Calu3 (cell line): ENCODE measurements at regions of chr6 and their contacts with region 1.

Region 1: DNA sequence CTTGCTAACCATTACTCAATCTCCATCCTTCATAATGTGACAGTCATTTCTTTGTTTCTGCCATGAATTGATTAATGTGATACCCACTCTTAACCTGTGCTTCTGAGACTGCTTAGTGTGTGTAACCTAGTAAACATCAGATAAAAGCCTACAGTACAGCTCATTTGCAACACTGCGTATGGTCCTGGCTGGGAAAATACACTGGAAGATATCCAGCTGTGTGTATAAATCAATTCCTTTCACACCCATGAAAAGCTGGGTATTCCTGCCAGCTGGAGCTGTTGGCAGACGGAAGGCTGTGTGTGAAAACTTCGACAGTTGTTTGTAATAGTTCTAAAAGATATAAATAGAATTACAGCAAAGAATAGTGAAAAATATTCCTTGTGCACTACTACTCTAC is 509.2 kb downstream of the FRK start:
- DNase-seq: no peak
- H3K4me3 Mint-ChIP-seq: no peak overlapping the region
- H3K27ac Mint-ChIP-seq: no peak overlapping the region
- H3K4me1 Mint-ChIP-seq: no peaks in the 10 kb centered on the region
- H3K27me3 Mint-ChIP-seq: no peaks in the 10 kb centered on the region
- CTCF ChIP-seq: no peak

Region 2: DNA sequence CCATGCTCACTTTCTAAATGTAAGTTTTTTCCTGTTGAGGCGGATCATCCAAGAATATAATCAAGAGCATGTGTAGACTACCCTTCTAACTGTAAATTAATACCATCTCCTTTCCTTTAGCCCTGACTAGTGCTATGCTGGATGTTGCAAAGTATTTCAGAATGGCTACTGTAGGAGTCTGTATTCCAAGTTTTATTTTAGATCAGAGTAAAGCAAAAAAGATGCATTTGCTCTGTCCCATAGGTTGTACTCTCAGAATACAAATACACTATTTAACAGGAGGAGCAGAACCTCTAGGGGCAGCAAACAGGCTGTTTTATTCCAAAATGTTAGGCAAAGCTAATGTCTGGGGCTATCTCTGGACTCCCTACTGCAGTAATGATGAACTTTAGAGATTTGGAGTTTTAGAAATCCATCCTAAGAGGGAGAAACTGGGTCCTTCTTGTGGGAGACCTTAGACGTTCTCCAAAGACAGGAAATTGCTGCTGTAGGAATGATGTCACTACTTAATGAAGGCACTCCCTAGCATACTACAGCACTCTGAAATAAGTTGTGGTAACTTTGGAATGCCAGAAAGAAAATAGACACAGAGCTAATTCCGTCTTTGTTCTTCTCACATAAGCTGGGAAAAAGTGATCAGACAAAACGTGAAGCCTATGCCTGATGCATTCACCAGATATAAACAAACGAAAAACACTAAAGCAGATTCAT is 816.3 kb before region 1 on chr6:
- CTCF ChIA-PET with region 1: interaction called, 11 read pairs
- intact Hi-C with region 1: no loop called
- DNase-seq: no peak
- H3K4me3 Mint-ChIP-seq: no peak overlapping the region
- H3K27ac Mint-ChIP-seq: no peak overlapping the region
- H3K4me1 Mint-ChIP-seq: no peaks in the 10 kb centered on the region
- H3K27me3 Mint-ChIP-seq: no peaks in the 10 kb centered on the region
- CTCF ChIP-seq: no peak

Region 3: DNA sequence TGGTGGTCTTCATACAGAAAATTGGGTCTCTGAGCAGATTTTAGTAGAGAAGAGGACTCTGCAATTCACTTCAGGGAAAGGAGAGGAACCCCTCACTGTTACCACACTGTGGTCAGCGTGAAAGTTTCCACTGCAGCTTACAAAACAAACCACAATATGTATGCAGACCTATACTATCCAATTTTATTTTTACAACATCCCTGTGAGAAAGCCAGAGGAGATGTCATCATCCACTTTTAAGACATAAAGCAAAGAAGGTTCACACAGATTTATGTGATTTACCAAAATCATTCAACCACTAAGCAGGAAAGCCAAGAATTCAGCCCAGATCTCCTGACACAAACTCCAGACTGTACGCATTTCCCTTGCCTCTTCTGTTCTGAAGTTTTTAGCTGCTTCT is 66.7 kb after region 1 on chr6:
- CTCF ChIA-PET with region 1: no interaction called
- intact Hi-C with region 1: no loop called
- DNase-seq: no peak
- H3K4me3 Mint-ChIP-seq: no peak overlapping the region
- H3K27ac Mint-ChIP-seq: no peak overlapping the region
- H3K4me1 Mint-ChIP-seq: no peaks in the 10 kb centered on the region
- H3K27me3 Mint-ChIP-seq: no peaks in the 10 kb centered on the region
- CTCF ChIP-seq: no peak